Heart right ventricle (tissue), 16 donors: ENCODE measurements at regions of chr9 and their contacts with region 1.

Region 1: DNA sequence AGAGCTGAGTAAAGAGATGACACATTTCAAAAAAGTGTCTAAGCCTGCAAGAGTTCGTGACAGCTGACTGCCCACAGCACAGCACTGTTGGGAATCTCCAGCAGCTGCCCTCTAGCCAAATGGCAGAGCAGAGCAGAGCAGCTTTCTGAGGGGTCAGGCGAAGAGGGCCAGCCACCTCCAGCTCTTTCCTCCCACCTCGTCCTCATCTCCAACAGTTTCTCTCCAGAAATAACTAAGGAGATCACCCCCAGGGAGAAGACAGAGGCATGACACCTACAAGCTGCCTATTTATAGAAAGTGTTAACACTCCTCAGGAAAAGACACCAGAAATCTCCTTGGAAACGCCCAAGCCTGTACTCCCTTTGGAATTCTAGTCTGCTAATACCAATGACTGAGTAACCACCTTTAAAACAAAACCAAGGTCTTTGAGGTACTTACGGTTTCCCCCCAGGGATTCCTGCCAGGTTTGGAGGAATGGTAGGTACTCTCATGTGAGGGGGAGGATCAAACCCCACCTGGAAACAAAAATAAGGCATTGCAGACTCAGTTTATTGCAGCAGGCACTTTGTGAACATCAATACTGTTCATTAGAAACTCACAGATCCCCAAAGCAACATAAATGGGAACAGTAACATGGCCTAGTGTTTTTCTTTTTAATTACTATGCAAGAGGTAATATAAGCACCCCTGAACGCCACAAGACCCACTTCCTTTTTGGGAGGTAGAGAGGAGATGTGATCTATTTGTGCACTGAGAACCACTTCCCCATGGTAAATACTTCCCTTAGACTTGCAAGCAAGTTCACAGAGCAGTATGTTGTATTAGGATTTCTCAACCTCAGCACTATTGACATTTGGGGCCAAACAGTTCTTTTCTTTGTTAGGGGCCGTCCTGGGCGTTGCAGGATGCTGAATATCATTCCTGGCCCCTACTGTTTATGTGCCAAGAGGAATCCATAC is 79.3 kb downstream of the TLE1 start:
- DNase-seq: no peak
- ATAC-seq: no peak
- H3K4me3 ChIP-seq: no peak overlapping the region
- H3K27ac ChIP-seq: peak overlapping the region in 1 of 10 donors; percentile 5
- H3K4me1 ChIP-seq: peaks cover 3 to 27% (median 12%) of the 10 kb centered on the region in 9 donors
- H3K27me3 ChIP-seq: no peaks in the 10 kb centered on the region
- CTCF ChIP-seq: no peak

Region 2: DNA sequence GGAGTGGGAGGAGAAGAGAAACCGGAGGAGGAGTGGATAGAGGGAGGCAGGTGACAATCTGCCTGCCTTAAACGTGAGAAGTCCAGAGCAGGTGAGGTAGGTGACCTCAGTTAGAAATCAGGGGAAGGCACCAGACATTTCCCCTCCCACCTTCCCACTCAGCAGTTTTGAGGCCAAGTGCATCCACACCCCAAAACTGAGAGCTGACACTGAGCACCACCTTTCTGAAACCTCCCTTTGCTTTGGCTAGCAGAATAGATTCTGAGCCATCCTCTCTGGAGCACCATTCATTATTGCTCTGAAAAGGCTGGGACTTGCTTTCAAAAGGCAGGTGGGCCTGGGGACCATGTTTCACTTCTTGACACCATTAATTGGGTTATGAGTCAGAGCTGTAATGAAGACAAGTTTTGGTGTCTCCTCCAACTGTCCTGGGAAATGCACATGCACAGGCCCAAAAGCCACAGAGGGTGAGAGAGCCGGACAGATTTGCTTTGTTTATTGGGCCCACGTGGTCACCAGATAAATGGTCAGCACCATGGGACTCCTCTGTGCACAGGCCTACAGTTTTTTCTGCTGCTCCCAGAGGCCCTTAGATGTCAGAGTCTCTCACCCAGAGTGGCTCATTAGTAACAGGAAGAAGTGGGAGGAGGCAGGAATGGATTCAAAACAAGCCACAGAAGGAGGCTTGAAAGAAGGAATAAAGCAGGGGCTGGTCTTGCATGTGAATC is 235.4 kb before region 1 on chr9:
- intact Hi-C with region 1: loop called in 1 of 10 experiments (anchors 10 kb)
- DNase-seq: peak in 1 of 2 donors; percentile 38
- ATAC-seq: peak; percentile 44 to 69 (median 51)
- H3K4me3 ChIP-seq: no peak overlapping the region
- H3K27ac ChIP-seq: peak overlapping the region in 4 of 10 donors; percentile 55 to 67 (median 57)
- H3K4me1 ChIP-seq: peaks cover 0 to 48% (median 23%) of the 10 kb centered on the region in 9 donors
- H3K27me3 ChIP-seq: no peaks in the 10 kb centered on the region
- CTCF ChIP-seq: no peak

Region 3: GRCh38 chr9:81574405-81574804 is 35.7 kb before region 1 on chr9:
- intact Hi-C with region 1: no loop called
- DNase-seq: no peak
- ATAC-seq: no peak
- H3K4me3 ChIP-seq: no peak overlapping the region
- H3K27ac ChIP-seq: no peak overlapping the region
- H3K4me1 ChIP-seq: peaks cover 0 to 6% (median 0%) of the 10 kb centered on the region in 9 donors
- H3K27me3 ChIP-seq: no peaks in the 10 kb centered on the region
- CTCF ChIP-seq: no peak

Region 4: DNA sequence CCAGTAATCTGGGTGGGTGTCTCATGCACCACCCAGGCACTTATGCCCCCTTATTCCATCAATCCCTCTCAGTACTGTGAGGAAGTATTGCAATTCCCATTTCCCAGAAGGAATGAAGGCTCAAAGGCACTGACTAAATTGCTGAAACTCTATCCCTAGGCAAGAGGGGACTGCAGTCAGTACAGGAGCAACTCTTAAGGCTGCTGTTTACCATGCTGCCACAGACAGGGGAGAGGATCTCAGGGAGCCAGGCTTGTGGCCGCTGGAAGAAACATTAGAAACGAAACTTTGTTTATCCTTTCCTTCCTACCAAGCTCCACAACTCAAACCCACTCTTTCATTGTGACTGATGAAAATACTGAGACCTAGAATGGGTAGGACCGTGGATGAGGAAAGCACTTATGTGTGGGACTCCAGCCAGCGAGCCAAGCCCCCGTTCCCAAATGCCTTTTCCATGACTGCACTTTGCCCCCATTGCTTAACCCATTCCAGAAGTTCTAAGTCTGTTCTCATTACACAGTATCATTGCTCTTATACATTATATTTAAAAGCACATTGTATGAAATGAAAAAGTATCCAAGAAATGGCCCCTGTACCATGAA is 25.0 kb after region 1 on chr9:
- intact Hi-C with region 1: loop called in 1 of 10 experiments (anchors 2 kb)
- DNase-seq: no peak
- ATAC-seq: no peak
- H3K4me3 ChIP-seq: no peak overlapping the region
- H3K27ac ChIP-seq: no peak overlapping the region
- H3K4me1 ChIP-seq: peaks cover 0 to 3% (median 0%) of the 10 kb centered on the region in 9 donors
- H3K27me3 ChIP-seq: no peaks in the 10 kb centered on the region
- CTCF ChIP-seq: no peak